Caco-2 (cell line): ENCODE measurements at regions of chr4 and their contacts with region 1.

Region 1: DNA sequence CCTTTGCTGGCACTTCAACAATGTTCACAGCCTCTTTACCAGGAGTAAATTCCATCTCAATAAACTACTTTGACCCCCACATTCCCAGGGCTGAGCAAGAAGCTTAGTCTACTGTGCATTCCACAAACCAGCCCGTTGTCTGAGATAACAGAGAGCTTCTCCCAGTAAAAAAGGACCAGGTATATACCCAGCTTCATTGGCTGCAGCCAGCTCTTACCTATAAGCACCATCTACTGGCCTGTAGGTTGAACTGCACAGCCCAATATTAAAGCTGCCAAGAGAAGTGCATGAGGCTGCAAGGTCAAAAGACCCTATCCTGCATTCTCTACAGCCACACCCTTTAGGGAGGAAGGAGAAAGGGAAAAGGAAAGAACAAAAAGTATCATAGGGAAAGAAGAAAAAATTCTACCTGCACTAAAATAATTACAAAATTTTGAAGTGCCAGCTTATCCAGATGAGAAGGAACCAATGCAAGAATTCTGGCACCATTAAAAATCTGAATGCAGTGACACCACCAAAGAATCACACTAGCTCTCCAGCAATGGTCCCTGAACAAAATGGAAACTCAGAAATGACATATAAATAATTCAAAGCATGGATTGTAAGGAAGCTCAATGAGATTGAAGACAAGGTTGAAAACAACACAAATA is 45.7 kb upstream of the INTU start:
- DNase-seq: peak; percentile 49 to 56
- H3K4me3 ChIP-seq: no peak overlapping the region
- H3K4me3 Mint-ChIP-seq: no peak overlapping the region
- H3K27ac Mint-ChIP-seq: no peak overlapping the region
- H3K4me1 ChIP-seq: no peaks in the 10 kb centered on the region
- H3K4me1 Mint-ChIP-seq: no peaks in the 10 kb centered on the region
- H3K27me3 ChIP-seq: no peaks in the 10 kb centered on the region
- H3K27me3 Mint-ChIP-seq: peaks cover 6% of the 10 kb centered on the region
- CTCF ChIP-seq: peak; percentile 62 to 66

Region 2: GRCh38 chr4:127261469-127261868 is 325.6 kb before region 1 on chr4:
- CTCF ChIA-PET with region 1: no interaction called
- POLR2A ChIA-PET with region 1: no interaction called
- intact Hi-C with region 1: no loop called
- DNase-seq: no peak
- H3K4me3 ChIP-seq: no peak overlapping the region
- H3K4me3 Mint-ChIP-seq: no peak overlapping the region
- H3K27ac Mint-ChIP-seq: no peak overlapping the region
- H3K4me1 ChIP-seq: no peaks in the 10 kb centered on the region
- H3K4me1 Mint-ChIP-seq: no peaks in the 10 kb centered on the region
- H3K27me3 ChIP-seq: no peaks in the 10 kb centered on the region
- H3K27me3 Mint-ChIP-seq: no peaks in the 10 kb centered on the region
- CTCF ChIP-seq: no peak

Region 3: GRCh38 chr4:127486248-127486647 is 100.8 kb before region 1 on chr4:
- CTCF ChIA-PET with region 1: no interaction called
- POLR2A ChIA-PET with region 1: no interaction called
- intact Hi-C with region 1: loop called (anchors 10 kb)
- DNase-seq: no peak
- H3K4me3 ChIP-seq: no peak overlapping the region
- H3K4me3 Mint-ChIP-seq: no peak overlapping the region
- H3K27ac Mint-ChIP-seq: no peak overlapping the region
- H3K4me1 ChIP-seq: no peaks in the 10 kb centered on the region
- H3K4me1 Mint-ChIP-seq: no peaks in the 10 kb centered on the region
- H3K27me3 ChIP-seq: no peaks in the 10 kb centered on the region
- H3K27me3 Mint-ChIP-seq: peaks cover 3% of the 10 kb centered on the region
- CTCF ChIP-seq: no peak

Region 4: DNA sequence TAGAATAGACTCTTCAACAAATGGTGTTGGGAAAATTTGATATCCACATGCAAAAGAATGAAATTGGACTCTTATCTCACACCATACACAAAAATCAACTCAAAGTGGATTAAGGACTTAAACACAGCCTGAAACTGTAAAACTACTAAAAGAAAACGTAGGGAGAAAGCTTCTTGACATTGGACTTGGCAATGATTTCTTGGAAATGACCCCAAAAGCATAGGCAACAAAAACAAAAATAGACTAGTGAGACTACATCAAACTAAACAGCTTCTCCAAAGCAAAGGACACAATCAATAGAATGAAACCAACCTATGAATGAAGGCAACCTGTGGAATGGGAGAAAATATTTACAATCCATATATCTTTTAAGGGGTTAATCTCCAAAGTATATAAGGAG is 49.0 kb before region 1 on chr4:
- CTCF ChIA-PET with region 1: interaction called, 3 read pairs
- POLR2A ChIA-PET with region 1: no interaction called
- intact Hi-C with region 1: loop called (anchors 1 kb)
- DNase-seq: no peak
- H3K4me3 ChIP-seq: no peak overlapping the region
- H3K4me3 Mint-ChIP-seq: no peak overlapping the region
- H3K27ac Mint-ChIP-seq: no peak overlapping the region
- H3K4me1 ChIP-seq: no peaks in the 10 kb centered on the region
- H3K4me1 Mint-ChIP-seq: no peaks in the 10 kb centered on the region
- H3K27me3 ChIP-seq: no peaks in the 10 kb centered on the region
- H3K27me3 Mint-ChIP-seq: peaks cover 3% of the 10 kb centered on the region
- CTCF ChIP-seq: no peak

Region 5: GRCh38 chr4:127555106-127555505 is 31.9 kb before region 1 on chr4:
- CTCF ChIA-PET with region 1: no interaction called
- POLR2A ChIA-PET with region 1: no interaction called
- intact Hi-C with region 1: no loop called
- DNase-seq: no peak
- H3K4me3 ChIP-seq: no peak overlapping the region
- H3K4me3 Mint-ChIP-seq: no peak overlapping the region
- H3K27ac Mint-ChIP-seq: no peak overlapping the region
- H3K4me1 ChIP-seq: no peaks in the 10 kb centered on the region
- H3K4me1 Mint-ChIP-seq: no peaks in the 10 kb centered on the region
- H3K27me3 ChIP-seq: no peaks in the 10 kb centered on the region
- H3K27me3 Mint-ChIP-seq: no peaks in the 10 kb centered on the region
- CTCF ChIP-seq: no peak

Region 6: DNA sequence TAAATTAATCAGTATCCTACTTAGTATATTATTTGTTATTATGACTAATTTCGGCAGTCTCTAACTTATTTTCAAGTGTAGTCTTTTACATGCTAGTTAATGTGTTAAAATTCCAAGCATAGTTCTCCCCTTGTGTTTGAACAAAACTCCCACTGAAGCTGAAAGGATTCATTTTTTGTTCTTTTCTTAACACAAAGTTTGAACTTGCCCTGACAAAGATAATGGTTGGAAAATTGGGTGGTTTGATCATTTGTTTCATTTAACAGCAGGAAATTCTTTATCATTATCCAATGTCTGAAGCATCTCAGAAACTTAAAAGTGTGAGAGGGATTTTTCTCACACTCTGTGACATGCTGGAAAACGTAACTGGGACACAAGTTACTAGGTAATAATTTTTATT is 81.7 kb after region 1 on chr4:
- CTCF ChIA-PET with region 1: no interaction called
- POLR2A ChIA-PET with region 1: no interaction called
- intact Hi-C with region 1: no loop called
- DNase-seq: no peak
- H3K4me3 ChIP-seq: no peak overlapping the region
- H3K4me3 Mint-ChIP-seq: no peak overlapping the region
- H3K27ac Mint-ChIP-seq: no peak overlapping the region
- H3K4me1 ChIP-seq: peaks cover 9% of the 10 kb centered on the region
- H3K4me1 Mint-ChIP-seq: peaks cover 11% of the 10 kb centered on the region
- H3K27me3 ChIP-seq: no peaks in the 10 kb centered on the region
- H3K27me3 Mint-ChIP-seq: no peaks in the 10 kb centered on the region
- CTCF ChIP-seq: no peak